Cardiac septum (tissue), 1 donor: ENCODE measurements at regions of chr5 and their contacts with region 1.

Region 1: DNA sequence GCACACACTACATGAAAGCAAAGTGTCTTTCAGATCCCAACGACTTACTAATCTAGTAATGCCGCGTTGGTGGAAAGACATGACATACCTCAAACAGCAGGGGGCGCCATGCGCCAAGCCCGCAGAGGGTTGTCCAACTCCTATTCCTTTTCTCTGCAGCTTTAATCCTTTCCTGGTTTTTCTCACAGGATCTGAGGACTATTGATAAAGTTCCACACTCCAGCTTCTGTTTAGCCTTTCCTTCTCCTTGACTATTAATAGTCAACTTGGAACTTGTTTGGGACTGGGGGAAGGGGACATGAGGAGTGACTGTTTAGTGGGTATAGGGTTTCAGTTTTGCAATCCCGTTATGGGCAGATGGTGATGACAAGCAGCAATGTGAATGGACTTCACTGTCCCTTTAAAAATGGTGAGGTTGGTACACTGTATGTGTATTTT is 62.9 kb downstream of the OTULIN start:
- DNase-seq: no peak

Region 2: GRCh38 chr5:14628346-14628745 is 99.1 kb before region 1 on chr5:
- intact Hi-C with region 1: no loop called
- DNase-seq: no peak

Region 3: DNA sequence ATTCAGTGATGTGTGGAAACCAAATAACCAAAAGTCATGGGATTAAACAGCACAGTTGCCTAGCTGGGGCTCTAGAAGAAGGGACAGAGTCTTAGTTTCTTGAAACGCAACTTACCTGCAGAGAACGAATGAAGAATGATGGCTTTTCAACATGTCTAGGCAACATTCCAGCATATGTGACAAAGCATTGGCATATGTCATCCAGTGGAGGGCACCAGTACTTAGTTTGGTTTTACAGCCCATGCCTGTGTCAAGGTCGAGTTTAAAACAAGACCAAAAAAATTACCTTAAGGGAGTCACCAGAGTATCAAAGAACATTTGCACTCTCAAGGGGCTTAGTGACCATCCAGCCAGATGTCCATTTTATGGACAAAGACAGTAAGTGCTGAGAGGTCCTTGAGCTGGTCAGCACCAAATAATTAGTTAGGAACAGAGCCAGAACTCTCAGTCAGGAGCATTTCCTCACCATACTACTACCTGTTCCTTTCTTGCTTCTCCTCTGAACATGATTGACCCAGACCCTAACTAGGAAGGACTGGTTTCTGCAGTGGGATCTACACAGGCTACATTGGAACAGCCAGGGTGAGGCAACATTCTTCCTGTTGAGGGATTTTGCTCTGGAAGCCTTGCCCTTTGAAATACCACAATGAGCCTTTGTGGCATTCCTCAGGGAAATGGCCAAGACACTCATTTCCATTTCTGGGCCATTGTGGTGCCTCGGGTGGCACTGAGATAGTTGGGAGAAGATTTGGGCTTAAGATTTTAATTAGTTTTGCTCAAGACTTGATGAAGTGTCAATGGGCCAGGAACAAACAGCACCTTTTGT is 219.6 kb after region 1 on chr5:
- intact Hi-C with region 1: loop called (anchors 5 kb)
- DNase-seq: no peak